ENCODE measurements at regions of chr2 and their contacts with region 1.

Region 1: DNA sequence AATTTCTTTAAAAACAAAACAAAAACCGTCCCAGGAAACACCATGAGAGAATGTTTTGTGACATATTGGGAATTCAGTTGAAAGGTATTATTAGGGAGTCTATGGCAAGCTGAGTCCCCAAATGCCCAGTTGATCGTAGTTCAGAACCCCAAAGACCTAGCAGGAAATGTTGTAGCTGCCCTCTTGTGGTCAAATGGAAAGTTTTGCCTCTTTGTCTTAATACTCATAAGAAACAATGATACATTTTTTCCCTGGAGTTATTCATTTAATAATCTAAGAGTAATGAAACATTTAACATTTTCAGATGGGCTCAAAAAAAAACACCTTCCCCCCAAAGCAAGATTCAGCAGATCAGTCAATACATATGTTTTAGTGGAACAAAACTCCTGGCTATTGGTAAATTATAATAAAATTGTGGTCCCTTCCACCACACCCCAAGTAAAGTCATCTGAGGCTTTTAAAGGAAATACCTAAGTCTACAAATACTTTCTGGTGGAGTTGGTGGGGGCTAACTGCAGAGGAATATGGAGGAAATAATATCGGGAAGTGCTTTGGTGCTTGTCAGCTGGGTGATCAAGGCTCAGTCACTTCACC is 37.8 kb upstream of the EFEMP1 start:
- DNase-seq: no peak
- H3K4me3 ChIP-seq: no peak overlapping the region
- CTCF ChIP-seq: peak; percentile 55

Region 2: DNA sequence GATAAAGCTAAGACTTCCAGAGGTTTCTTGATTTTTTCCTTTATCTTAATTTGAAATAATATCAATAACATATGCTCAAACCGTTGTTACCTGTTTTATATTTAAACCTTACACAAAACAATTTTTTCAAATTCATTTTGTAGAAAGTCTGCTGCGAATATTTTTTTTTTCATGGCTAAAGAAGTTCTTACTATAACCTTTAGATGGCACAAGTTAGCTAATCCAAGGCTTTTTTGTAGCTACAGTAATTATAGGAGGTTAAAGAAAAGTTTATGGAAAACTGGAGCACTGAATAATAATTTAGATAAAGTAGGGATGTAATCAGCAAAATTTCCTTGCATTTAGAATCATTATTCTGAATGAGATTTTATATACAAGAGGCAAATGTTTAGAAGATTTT is 189.8 kb before region 1 on chr2:
- CTCF ChIA-PET with region 1: interaction called, 163 read pairs
- POLR2A ChIA-PET with region 1: interaction called, 5 read pairs
- DNase-seq: no peak
- H3K4me3 ChIP-seq: no peak overlapping the region
- CTCF ChIP-seq: peak; percentile 12

Region 3: DNA sequence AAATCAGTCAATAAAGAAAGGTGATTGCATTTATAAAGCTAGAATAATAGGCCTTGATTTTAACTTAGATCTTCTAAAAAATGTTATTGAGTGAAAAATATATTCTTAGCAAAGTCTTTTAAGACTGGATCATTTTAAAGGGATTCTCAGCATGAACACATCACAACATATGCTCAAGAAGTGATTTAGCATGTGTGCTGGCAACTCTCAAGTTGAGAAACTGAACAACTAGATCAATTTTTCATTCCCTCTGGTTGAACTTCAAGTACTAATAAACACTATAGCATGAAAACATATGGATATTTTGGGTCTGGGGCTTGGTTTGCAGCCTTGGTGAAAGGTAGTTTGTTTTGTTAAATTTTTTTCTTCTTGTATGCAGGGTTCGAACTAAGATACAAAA is 160.0 kb before region 1 on chr2:
- CTCF ChIA-PET with region 1: no interaction called
- POLR2A ChIA-PET with region 1: no interaction called
- DNase-seq: no peak
- H3K4me3 ChIP-seq: no peak overlapping the region
- CTCF ChIP-seq: no peak

Region 4: GRCh38 chr2:55948176-55948921 is 13.1 kb before region 1 on chr2:
- CTCF ChIA-PET with region 1: interaction called, 25 read pairs
- POLR2A ChIA-PET with region 1: no interaction called
- DNase-seq: no peak
- H3K4me3 ChIP-seq: no peak overlapping the region
- CTCF ChIP-seq: no peak

Region 5: DNA sequence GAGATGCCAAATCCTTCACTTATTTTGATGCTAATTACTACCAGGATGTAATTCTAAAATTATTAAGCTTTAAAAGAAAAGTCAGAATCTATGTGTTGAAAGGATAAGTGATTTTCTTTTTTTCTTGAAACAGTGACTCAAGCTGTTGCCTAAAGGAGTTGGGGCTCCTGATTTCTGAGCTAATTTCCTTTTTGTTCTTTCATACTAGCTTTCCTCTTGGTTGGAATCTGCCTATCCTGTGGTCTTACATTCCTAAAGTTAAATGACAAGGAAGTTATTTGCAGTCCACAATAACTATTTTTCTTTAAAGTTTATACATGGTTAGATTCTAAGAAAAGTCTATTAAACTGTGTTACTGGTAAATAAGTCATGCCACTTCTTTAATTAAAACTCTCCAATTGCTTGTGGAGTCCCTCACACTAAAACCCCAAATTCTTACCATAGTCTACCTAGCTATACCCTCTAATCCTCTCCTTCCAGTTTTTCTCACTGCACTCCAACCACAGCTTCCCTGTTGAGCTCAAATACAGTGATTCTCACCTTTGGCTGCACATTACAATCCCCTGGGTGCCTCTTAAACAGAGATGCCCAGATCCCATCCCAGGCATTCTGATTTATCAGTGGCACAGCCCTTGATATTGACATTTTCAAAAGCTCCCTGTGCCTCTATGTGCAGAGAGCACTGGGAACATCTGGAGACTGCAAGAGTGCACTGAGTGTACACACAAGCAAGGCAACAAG is 25.5 kb after region 1 on chr2:
- CTCF ChIA-PET with region 1: interaction called, 22 read pairs
- POLR2A ChIA-PET with region 1: no interaction called
- DNase-seq: no peak
- H3K4me3 ChIP-seq: no peak overlapping the region
- CTCF ChIP-seq: no peak

Region 6: DNA sequence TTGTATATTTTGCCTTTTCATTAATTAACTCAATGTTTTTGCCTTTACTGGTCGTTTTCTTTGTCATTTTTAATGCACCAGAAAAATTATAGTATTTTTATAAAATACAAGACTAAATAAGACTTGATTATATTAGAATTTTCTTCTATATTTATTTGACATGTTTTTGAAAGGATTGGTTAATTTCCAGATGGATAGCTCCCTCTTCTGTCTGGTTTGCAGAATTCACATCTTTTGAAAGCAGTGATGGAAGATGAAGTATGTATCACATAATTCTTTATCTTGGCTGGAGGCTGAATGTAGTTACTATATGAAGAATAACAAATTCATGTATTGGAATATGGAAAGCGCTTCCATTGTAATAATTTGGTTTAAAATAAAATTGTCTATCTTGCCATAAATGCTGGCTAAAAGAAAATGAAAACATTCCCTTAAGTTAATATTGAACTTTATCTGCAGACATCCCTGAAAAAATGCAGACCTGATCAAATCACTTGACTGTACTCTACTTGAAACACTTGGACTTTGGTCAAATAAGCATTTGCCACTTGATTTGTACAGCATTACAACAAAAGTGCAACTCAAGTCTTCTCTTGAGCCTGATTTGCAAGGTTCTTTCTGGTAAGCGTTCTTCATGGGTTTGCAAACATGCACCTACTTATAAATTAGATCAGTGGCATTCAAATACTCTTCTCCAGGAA is 48.5 kb after region 1 on chr2:
- CTCF ChIA-PET with region 1: interaction called, 11 read pairs
- POLR2A ChIA-PET with region 1: no interaction called
- DNase-seq: peak; percentile 31
- H3K4me3 ChIP-seq: no peak overlapping the region
- CTCF ChIP-seq: peak; percentile 50

Region 7: DNA sequence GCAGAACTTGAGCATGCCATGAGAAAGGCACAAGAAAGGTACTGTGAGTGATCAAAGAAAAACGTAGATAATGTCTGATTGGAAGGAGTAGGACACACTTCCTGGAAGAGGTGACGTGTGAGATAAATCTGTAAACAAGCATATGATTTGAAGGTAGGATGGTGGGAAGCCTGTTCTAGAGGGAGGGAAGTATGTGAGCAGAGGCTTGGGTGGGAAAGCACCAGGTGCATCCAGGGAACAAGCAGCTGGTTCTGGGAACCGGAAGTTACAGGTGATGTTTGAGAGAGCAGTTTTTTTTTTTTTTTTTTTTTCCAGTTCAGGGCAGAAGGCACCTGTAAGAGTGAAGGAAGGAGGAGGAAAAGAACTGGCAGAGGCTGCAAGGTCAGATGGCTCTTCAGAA is 78.8 kb after region 1 on chr2:
- CTCF ChIA-PET with region 1: no interaction called
- POLR2A ChIA-PET with region 1: no interaction called
- DNase-seq: no peak
- H3K4me3 ChIP-seq: no peak overlapping the region
- CTCF ChIP-seq: no peak

Region 8: GRCh38 chr2:56183643-56184499 is 222.5 kb after region 1 on chr2 and contains the start of gene CCDC85A:
- CTCF ChIA-PET with region 1: no interaction called
- POLR2A ChIA-PET with region 1: no interaction called
- DNase-seq: no peak
- H3K4me3 ChIP-seq: peak within 1 kb of the TSS; percentile 76
- CTCF ChIP-seq: peak; percentile 94

Measured in AG04449 (cell line).